Activated CD8-positive, alpha-beta memory T cell treated with anti-CD3 and anti-CD28 coated beads, Interleukin-2, amount 10 ng/mL, durations not matched to agents 7 days and 5 days (primary cell): ENCODE measurements at regions of chr12 and their contacts with region 1.

Region 1: DNA sequence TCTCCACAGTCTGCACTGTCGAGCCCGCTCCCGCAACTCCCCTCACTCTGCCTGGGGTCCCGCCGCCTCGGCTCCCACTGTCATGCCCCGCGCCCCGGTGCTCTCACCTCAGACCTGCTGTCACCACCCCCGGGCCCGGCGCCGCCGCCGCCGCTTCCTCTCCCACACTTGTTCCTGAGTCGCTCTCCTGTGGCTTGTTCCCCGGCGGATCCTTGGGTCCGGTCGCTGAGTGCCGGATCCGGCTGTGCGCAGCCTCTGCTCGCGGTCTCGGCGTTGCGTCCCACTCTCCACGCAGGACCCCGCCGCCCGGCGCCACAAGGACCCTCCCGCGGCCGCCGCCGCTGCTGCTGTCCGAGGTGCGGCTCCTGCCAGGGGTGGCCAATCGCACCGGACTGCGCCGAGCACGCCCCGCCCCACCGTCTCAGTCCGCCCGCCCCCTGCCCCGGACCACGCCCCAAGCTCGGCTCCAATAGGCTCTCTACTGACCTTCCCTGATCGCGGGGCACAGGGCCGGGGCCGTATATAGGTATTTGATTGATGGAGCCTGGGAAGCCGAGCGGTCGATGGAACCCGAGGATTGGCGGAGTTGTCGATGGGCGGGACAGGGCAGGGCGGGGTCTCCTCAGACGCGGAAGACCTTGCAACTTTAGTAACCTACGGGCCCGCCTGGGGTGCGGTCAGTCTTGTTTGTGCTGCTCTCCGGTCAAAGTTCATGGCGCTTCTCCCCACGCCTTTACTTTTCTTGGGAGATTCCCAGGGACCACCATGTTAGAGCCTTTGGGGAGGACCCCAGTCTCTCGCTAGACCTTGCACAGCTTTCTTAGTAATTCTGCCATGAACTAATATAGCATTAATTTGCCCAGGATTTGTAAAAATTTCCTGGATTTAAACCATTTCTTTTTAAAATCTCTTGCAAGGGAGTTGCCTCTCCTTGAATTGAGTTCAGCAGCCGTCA is at the start of gene TAOK3:
- DNase-seq: peak; percentile 98
- ATAC-seq: peak; percentile 88
- H3K4me3 Mint-ChIP-seq: peak within 1 kb of the TSS; percentile 88
- H3K27ac Mint-ChIP-seq: peak within 1 kb of the TSS; percentile 90
- H3K4me1 Mint-ChIP-seq: peaks cover 40% of the 10 kb centered on the region
- H3K27me3 Mint-ChIP-seq: peaks cover 3% of the 10 kb centered on the region
- total RNA-seq, gene TAOK3: 60.5 to 64.9 TPM

Region 2: GRCh38 chr12:118120579-118121363 is 252.0 kb before region 1 on chr12:
- CTCF ChIA-PET with region 1: interaction called, 54 read pairs
- DNase-seq: peak; percentile 75
- ATAC-seq: peak; percentile 86
- H3K4me3 Mint-ChIP-seq: no peak overlapping the region
- H3K27ac Mint-ChIP-seq: peak overlapping the region; percentile 74
- H3K4me1 Mint-ChIP-seq: peaks cover 8% of the 10 kb centered on the region
- H3K27me3 Mint-ChIP-seq: no peaks in the 10 kb centered on the region

Region 3: GRCh38 chr12:118164798-118165486 is 207.9 kb before region 1 on chr12:
- CTCF ChIA-PET with region 1: interaction called, 31 read pairs
- DNase-seq: no peak
- ATAC-seq: no peak
- H3K4me3 Mint-ChIP-seq: no peak overlapping the region
- H3K27ac Mint-ChIP-seq: no peak overlapping the region
- H3K4me1 Mint-ChIP-seq: peaks cover 14% of the 10 kb centered on the region
- H3K27me3 Mint-ChIP-seq: no peaks in the 10 kb centered on the region

Region 4: DNA sequence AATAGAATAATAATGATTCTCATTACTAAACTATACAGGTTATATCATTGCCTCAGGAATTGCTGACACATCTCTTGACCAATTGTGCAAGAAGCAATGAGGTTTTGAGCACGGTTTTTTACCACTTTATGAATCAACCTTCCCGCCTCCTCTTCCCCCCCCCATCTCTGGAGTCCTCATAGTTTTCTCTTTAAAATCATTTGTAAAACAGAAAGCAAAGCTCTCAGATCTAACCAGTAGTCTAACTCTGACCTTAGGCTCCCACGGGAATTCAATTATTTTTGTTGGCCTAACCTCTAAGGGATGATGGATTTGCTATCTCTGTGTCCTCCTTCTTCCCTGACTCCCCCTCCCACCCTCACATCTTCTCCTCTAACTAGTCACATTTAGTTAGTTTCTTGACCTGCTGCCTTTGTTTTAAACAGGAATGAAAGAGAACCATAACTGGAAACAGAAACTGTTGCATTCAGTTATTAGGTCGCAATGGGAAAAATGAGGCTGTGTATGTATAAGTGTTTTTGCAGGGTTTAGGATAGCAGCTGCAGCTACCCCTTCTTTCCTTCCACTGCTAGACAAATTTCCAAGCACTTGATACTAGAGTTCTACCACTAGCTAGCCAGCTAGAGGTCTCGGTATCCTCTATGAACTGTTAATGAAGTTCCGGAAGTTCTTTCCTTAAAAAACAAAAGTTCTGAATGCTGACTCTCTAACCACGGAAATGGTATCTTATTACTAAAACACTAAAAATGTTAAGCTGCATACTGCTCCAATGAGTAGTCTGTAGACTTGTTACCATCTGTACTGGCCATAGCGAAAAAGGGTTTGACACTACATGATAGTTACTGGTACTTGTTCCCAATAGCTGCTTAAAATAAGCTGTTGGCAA is 65.5 kb before region 1 on chr12:
- CTCF ChIA-PET with region 1: interaction called, 13 read pairs
- DNase-seq: peak; percentile 72
- ATAC-seq: peak; percentile 75
- H3K4me3 Mint-ChIP-seq: peak overlapping the region; percentile 72
- H3K27ac Mint-ChIP-seq: peak overlapping the region; percentile 84
- H3K4me1 Mint-ChIP-seq: peaks cover 55% of the 10 kb centered on the region
- H3K27me3 Mint-ChIP-seq: no peaks in the 10 kb centered on the region

Region 5: GRCh38 chr12:118404876-118405521 is 32.2 kb after region 1 on chr12:
- CTCF ChIA-PET with region 1: interaction called, 11 read pairs
- DNase-seq: peak; percentile 69
- ATAC-seq: peak; percentile 55
- H3K4me3 Mint-ChIP-seq: no peak overlapping the region
- H3K27ac Mint-ChIP-seq: no peak overlapping the region
- H3K4me1 Mint-ChIP-seq: peaks cover 1% of the 10 kb centered on the region
- H3K27me3 Mint-ChIP-seq: no peaks in the 10 kb centered on the region